Naive thymus-derived CD4-positive, alpha-beta T cell (primary cell): ENCODE measurements at regions of chr5 and their contacts with region 1.

Region 1: DNA sequence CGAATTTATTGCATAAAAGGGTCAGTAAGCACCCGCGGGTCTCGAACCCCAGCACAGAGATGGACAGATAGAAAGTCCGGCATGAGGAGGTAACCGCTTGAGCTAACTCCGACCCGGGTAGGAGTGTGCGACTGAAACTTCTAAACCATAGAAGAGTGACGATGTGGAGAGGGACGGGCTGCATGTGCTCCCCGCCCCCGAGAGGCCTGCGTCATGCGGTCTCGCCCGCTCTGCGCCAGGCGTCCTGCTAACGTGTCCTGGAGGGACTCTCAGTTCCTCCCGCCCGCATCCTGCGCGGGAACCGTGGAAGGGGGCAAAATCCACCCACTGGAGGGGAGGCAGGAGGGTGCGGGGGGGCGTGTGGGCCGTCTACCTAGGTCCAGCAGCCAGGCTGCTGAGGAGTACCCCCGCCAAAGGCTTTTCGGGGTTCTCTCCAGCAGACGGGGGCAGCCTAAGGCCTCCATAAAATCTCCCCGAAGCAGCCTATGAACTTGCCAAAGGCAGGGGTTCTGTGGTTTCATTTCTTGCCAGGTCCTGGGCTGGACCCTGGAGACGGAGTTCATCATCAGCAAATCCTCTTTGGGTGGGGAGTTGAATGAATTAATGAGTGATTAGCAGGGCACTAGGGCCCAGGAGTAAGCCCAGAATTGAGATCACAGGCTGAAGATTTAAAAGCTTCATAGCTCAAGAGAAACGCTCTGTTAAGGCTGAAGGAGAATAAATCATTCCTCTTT is 51.9 kb downstream of the TGFBI start:
- DNase-seq: peak in 5 of 9 donors; percentile 9 to 84 (median 37)
- ATAC-seq: peak; percentile 95
- H3K4me3 ChIP-seq: peak overlapping the region; percentile 23
- H3K4me3 Mint-ChIP-seq: peak overlapping the region in 7 of 10 donors; percentile 10 to 82 (median 39)
- H3K27ac ChIP-seq: no peak overlapping the region
- H3K27ac Mint-ChIP-seq: no peak overlapping the region
- H3K4me1 ChIP-seq: peaks cover 0 to 4% of the 10 kb centered on the region in 2 donors
- H3K4me1 Mint-ChIP-seq: peaks cover 0 to 17% (median 0%) of the 10 kb centered on the region in 7 donors
- H3K27me3 ChIP-seq: no peaks in the 10 kb centered on the region
- H3K27me3 Mint-ChIP-seq: peaks cover 38 to 58% (median 43%) of the 10 kb centered on the region in 5 donors

Region 2: DNA sequence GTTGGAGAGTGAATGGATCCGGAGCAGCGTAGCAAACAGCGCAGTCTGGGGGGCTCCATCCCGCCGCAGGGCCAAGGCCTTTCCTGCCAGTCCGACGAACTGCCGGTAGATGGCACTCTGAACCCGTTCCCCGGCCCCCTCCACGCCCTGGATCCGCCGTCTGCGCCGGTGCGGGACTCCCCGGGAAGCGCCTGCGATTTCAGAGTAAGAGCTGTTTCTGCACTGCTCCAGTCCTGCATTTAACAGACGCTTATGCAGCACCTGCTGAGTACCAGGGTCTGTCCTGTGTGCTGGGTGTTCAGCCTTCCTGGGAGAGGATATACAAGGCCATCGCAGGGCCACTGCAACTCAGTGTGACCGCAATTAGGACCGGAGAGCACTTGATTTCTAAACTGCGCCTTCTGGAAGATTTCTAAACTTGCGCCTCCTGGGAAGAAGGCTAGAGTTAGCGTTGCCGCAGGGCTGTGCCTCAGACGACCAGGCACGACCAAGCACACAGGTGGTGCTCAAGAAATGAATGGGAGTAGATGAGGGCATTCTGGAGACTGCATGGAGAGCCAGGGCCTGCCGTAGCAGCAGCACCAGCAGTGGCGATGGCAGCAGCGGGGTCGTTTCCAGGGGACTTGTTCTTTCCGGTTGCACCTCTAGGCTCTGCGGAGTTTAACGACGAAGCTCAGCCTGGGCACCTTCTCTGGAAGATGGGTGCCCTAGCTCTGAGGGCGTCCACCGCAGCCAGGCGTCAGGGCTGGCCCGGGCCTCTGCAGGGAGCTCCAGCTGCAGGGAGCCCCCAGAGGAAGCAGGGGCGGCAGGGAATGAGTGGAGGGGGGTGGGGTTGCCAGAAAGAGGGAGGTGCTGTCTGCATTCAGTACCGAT is 614.2 kb before region 1 on chr5:
- CTCF ChIA-PET with region 1: no interaction called
- POLR2A ChIA-PET with region 1: no interaction called
- intact Hi-C with region 1: loop called in 1 of 2 experiments (anchors 5 kb)
- DNase-seq: peak; percentile 36 to 80 (median 58)
- ATAC-seq: peak; percentile 82
- H3K4me3 ChIP-seq: peak overlapping the region; percentile 39
- H3K4me3 Mint-ChIP-seq: peak overlapping the region; percentile 5 to 83 (median 68)
- H3K27ac ChIP-seq: no peak overlapping the region
- H3K27ac Mint-ChIP-seq: peak overlapping the region in 2 of 9 donors; percentile 59 to 68
- H3K4me1 ChIP-seq: peaks cover 0 to 5% of the 10 kb centered on the region in 2 donors
- H3K4me1 Mint-ChIP-seq: peaks cover 6 to 15% (median 10%) of the 10 kb centered on the region in 7 donors
- H3K27me3 ChIP-seq: no peaks in the 10 kb centered on the region
- H3K27me3 Mint-ChIP-seq: peaks cover 23 to 52% (median 37%) of the 10 kb centered on the region in 5 donors

Region 3: DNA sequence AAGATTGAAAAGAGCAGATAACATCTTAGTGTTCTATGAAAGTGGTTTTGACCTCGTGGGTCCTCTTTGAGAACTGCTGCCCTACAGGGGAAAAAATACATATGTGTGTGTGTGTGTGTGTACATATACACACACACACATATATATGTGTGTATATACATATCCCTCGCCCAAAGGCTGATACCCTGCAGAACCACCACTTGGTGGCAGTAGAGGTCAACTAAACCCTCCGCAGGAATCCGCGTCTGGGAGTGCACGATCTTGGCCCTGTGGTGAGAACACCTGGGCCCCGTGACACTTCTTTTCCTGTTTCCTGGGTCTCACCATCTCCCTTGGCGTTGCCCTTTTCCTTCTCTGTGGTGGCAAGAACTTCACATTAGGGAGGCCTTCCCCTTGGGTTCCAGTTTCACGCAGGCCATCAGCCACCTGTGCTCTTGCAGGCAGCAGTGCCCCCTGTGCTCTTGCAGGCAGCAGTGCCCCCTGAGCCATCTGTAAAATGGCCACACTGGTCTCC is 193.2 kb before region 1 on chr5:
- CTCF ChIA-PET with region 1: no interaction called
- POLR2A ChIA-PET with region 1: no interaction called
- intact Hi-C with region 1: loop called (anchors 1 kb)
- DNase-seq: peak; percentile 14 to 57 (median 42)
- ATAC-seq: peak; percentile 86
- H3K4me3 ChIP-seq: no peak overlapping the region
- H3K4me3 Mint-ChIP-seq: peak overlapping the region in 7 of 10 donors; percentile 31 to 64 (median 39)
- H3K27ac ChIP-seq: no peak overlapping the region
- H3K27ac Mint-ChIP-seq: no peak overlapping the region
- H3K4me1 ChIP-seq: no peaks in the 10 kb centered on the region
- H3K4me1 Mint-ChIP-seq: peaks cover 0 to 9% (median 7%) of the 10 kb centered on the region in 7 donors
- H3K27me3 ChIP-seq: no peaks in the 10 kb centered on the region
- H3K27me3 Mint-ChIP-seq: peaks cover 7 to 21% (median 15%) of the 10 kb centered on the region in 5 donors

Region 4: GRCh38 chr5:135901633-135902032 is 179.0 kb before region 1 on chr5:
- CTCF ChIA-PET with region 1: no interaction called
- POLR2A ChIA-PET with region 1: no interaction called
- intact Hi-C with region 1: no loop called
- DNase-seq: no peak
- ATAC-seq: no peak
- H3K4me3 ChIP-seq: no peak overlapping the region
- H3K4me3 Mint-ChIP-seq: no peak overlapping the region
- H3K27ac ChIP-seq: no peak overlapping the region
- H3K27ac Mint-ChIP-seq: no peak overlapping the region
- H3K4me1 ChIP-seq: no peaks in the 10 kb centered on the region
- H3K4me1 Mint-ChIP-seq: no peaks in the 10 kb centered on the region
- H3K27me3 ChIP-seq: no peaks in the 10 kb centered on the region
- H3K27me3 Mint-ChIP-seq: peaks cover 19 to 46% (median 38%) of the 10 kb centered on the region in 5 donors

Region 5: DNA sequence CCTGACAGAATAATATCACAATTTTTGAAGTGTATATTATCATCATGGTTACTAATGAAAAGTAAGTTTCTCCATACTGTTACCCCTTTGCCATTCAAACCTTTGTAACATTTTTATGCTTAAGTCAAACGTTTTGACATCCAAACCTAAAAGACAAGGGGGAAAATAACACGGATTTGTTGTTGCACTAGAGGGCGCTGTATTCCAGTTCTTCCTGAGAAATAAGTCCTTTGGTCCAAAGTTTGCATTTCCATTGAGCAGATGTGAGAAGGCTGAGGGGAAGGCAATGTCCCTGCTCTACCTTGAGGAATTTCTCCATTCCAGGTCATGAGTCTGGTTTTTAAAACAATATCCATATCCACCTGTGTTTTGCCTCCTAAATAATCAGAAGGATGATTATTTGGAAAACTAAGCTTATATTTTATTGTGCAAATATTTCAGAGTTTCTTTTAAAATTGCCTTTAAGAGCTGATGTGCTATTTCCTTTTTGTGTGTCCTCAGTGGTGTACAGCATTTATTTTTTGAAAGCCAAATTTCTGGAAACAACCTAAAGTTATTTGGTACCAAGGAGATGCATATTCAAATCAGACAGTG is 135.6 kb before region 1 on chr5:
- CTCF ChIA-PET with region 1: no interaction called
- POLR2A ChIA-PET with region 1: no interaction called
- intact Hi-C with region 1: loop called in 1 of 2 experiments (anchors 1 kb)
- DNase-seq: peak in 1 of 9 donors; percentile 5
- ATAC-seq: no peak
- H3K4me3 ChIP-seq: no peak overlapping the region
- H3K4me3 Mint-ChIP-seq: no peak overlapping the region
- H3K27ac ChIP-seq: no peak overlapping the region
- H3K27ac Mint-ChIP-seq: no peak overlapping the region
- H3K4me1 ChIP-seq: no peaks in the 10 kb centered on the region
- H3K4me1 Mint-ChIP-seq: no peaks in the 10 kb centered on the region
- H3K27me3 ChIP-seq: no peaks in the 10 kb centered on the region
- H3K27me3 Mint-ChIP-seq: peaks cover 11 to 25% (median 19%) of the 10 kb centered on the region in 5 donors

Region 6: GRCh38 chr5:135977375-135977928 is 103.2 kb before region 1 on chr5:
- CTCF ChIA-PET with region 1: no interaction called
- POLR2A ChIA-PET with region 1: no interaction called
- intact Hi-C with region 1: loop called in 1 of 2 experiments (anchors 1 kb)
- DNase-seq: peak in 2 of 9 donors; percentile 52 to 58
- ATAC-seq: peak; percentile 93
- H3K4me3 ChIP-seq: no peak overlapping the region
- H3K4me3 Mint-ChIP-seq: no peak overlapping the region
- H3K27ac ChIP-seq: no peak overlapping the region
- H3K27ac Mint-ChIP-seq: no peak overlapping the region
- H3K4me1 ChIP-seq: no peaks in the 10 kb centered on the region
- H3K4me1 Mint-ChIP-seq: no peaks in the 10 kb centered on the region
- H3K27me3 ChIP-seq: peaks cover 0 to 3% of the 10 kb centered on the region in 2 donors
- H3K27me3 Mint-ChIP-seq: peaks cover 32 to 62% (median 43%) of the 10 kb centered on the region in 5 donors

Region 7: DNA sequence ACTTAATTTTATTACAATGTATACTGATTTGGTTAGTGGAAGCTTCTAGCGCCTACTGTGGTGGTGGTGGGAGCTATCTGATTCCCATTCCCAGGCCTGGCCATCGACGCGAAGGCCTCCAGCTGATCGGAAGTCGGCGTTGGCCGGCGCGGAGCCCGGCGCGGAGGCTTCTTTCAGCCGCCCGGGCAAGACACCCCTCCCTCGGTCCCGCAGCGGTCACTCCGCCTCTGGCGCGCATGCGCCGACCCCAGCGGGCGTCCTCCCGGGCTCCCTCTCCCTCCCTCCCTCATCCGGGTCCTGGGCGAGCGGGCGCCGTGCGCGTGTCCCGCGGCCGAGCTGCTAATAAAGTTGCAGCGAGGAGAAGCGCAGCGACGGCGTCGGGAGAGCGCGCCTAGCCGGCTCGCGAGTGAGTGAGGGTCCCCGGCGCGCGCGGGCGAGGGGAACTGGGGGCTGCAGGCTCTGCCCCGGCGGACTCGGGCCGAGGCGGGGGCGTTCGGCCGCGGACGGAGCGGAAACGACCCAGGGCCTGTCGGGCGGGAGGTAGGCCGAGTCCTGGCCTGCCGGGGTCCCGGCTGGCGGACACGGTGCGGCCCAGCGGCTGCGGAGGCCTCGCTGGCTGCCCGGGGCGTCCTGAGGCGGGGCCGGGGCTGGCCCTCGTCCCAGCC is 52.0 kb after region 1 on chr5 and contains the start of gene SMAD5:
- CTCF ChIA-PET with region 1: no interaction called
- POLR2A ChIA-PET with region 1: no interaction called
- intact Hi-C with region 1: loop called in 1 of 2 experiments (anchors 1 kb)
- DNase-seq: peak in 8 of 9 donors; percentile 12 to 86 (median 43)
- ATAC-seq: peak; percentile 89
- H3K4me3 ChIP-seq: peak within 1 kb of the TSS; percentile 59
- H3K4me3 Mint-ChIP-seq: peak within 1 kb of the TSS; percentile 71 to 92 (median 87)
- H3K27ac ChIP-seq: peak within 1 kb of the TSS; percentile 54
- H3K27ac Mint-ChIP-seq: peak within 1 kb of the TSS in 5 of 9 donors; percentile 43 to 82 (median 64)
- H3K4me1 ChIP-seq: peaks cover 0 to 4% of the 10 kb centered on the region in 2 donors
- H3K4me1 Mint-ChIP-seq: peaks cover 5 to 26% (median 18%) of the 10 kb centered on the region in 7 donors
- H3K27me3 ChIP-seq: peaks cover 0 to 4% of the 10 kb centered on the region in 2 donors
- H3K27me3 Mint-ChIP-seq: peaks cover 22 to 66% (median 52%) of the 10 kb centered on the region in 5 donors
- total RNA-seq, gene SMAD5: 1.8 to 17.6 (median 9.0) TPM

Region 8: DNA sequence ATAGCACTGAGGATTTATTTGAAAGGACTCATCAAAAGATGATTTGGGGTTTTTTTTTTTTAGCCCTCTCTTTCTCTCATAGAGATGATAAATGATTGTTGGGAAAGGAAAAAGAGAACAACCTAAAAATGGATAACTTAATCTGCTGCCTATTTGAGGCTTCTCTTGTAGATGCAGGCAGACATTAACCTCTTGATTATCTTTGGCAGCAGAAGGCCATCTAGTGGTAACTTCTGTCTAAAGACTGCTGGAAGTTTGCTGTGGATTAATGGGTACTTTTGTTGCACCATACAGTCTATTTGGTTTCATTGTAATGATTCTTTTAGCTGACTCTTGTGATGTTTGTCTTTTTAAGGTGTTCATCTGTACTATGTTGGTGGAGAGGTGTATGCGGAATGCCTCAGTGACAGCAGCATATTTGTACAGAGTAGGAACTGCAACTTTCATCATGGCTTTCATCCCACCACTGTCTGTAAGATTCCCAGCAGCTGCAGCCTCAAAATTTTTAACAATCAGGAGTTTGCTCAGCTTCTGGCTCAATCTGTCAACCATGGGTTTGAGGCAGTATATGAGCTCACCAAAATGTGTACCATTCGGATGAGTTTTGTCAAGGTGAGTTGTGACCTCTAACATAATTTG is 93.5 kb after region 1 on chr5:
- CTCF ChIA-PET with region 1: no interaction called
- POLR2A ChIA-PET with region 1: no interaction called
- intact Hi-C with region 1: loop called in 1 of 2 experiments (anchors 1 kb)
- DNase-seq: peak in 1 of 9 donors; percentile 5
- ATAC-seq: no peak
- H3K4me3 ChIP-seq: no peak overlapping the region
- H3K4me3 Mint-ChIP-seq: no peak overlapping the region
- H3K27ac ChIP-seq: no peak overlapping the region
- H3K27ac Mint-ChIP-seq: no peak overlapping the region
- H3K4me1 ChIP-seq: no peaks in the 10 kb centered on the region
- H3K4me1 Mint-ChIP-seq: peaks cover 0 to 1% (median 0%) of the 10 kb centered on the region in 7 donors
- H3K27me3 ChIP-seq: no peaks in the 10 kb centered on the region
- H3K27me3 Mint-ChIP-seq: no peaks in the 10 kb centered on the region

Region 9: GRCh38 chr5:136258463-136258862 is 177.8 kb after region 1 on chr5:
- CTCF ChIA-PET with region 1: no interaction called
- POLR2A ChIA-PET with region 1: no interaction called
- intact Hi-C with region 1: no loop called
- DNase-seq: no peak
- ATAC-seq: no peak
- H3K4me3 ChIP-seq: no peak overlapping the region
- H3K4me3 Mint-ChIP-seq: no peak overlapping the region
- H3K27ac ChIP-seq: no peak overlapping the region
- H3K27ac Mint-ChIP-seq: no peak overlapping the region
- H3K4me1 ChIP-seq: no peaks in the 10 kb centered on the region
- H3K4me1 Mint-ChIP-seq: no peaks in the 10 kb centered on the region
- H3K27me3 ChIP-seq: no peaks in the 10 kb centered on the region
- H3K27me3 Mint-ChIP-seq: peaks cover 2 to 36% (median 18%) of the 10 kb centered on the region in 5 donors